Right ventricle myocardium inferior (tissue), 1 donor: ENCODE measurements at regions of chr9 and their contacts with region 1.

Region 1: GRCh38 chr9:130107234-130107861 is 53.6 kb downstream of the GPR107 start:
- DNase-seq: peak; percentile 88
- ATAC-seq: peak; percentile 85

Region 2: GRCh38 chr9:130235897-130236668 is 128.7 kb after region 1 on chr9:
- intact Hi-C with region 1: loop called (anchors 1 kb)
- DNase-seq: peak; percentile 89
- ATAC-seq: peak; percentile 42

Region 3: DNA sequence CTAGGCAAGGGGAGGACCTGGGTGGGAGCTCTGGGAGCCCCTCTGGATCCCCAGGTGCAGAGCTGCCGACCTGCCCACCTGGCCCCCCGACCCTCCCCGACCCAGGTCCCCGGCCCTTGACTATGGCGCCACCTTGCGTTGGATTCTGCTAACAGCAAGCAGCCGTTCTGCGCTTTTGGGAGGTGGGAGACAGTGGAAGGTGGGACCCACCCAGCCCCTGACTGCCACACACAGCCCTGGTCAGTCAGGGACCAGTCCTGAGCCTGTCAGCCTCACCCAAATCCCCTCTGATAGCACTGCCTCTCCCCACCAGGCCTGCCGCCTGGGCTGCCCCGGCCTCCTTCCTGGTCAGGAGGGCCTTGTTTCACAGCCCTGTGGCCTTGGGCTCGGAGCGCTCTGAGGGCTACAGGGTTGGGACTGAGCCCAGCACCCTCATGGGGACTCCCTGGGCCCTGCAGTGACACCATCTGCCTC is 236.1 kb after region 1 on chr9:
- intact Hi-C with region 1: loop called (anchors 2 kb)
- DNase-seq: peak; percentile 56
- ATAC-seq: peak; percentile 26